CD8-positive, alpha-beta T cell (primary cell): ENCODE measurements at regions of chr14 and their contacts with region 1.

Region 1: DNA sequence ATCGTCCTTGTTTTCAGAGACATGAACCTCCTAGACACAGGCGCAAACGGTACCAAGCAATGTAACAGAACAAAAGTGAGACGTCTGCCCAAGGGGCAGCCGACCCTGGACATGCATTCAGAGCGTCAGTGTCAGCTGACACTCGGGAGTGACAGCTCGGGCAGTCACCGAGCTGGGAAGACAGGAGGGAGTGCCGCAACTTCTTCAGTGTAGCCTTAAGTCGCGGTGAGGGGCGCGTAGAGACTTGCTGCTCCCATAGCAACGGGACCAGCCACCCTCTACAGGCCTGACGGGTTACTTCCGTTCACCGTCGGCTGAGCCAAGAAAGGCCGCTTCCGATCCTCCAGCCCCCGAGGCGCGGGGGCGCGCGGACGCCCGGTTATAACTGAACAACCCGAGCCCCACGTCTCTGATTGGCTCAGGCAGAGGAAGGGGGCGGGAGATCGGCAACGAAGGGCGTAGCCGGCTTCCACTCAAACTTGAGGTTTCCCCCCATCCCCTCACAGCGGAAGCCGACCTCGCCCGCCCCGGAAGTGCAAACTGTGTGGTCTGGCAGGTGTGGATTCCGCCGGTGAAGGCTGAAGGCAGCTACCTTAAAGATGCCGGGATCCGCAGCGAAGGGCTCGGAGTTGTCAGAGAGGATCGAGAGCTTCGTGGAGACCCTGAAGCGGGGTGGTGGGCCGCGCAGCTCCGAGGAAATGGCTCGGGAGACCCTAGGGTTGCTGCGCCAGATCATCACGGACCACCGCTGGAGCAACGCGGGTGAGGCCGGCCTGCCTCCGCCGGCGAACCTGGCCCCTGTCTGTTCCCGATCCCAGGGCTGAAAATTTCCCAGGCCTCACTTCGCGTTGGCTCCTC is at the start of gene EIF2B2:
- DNase-seq: peak; percentile 98 to 99 (median 99)
- ATAC-seq: peak; percentile 96
- H3K4me3 ChIP-seq: peak within 1 kb of the TSS; percentile 81 to 94
- H3K4me3 Mint-ChIP-seq: peak within 1 kb of the TSS; percentile 97
- H3K27ac ChIP-seq: peak within 1 kb of the TSS; percentile 91 to 93
- H3K27ac Mint-ChIP-seq: peak within 1 kb of the TSS; percentile 97
- H3K4me1 ChIP-seq: peaks cover 19% of the 10 kb centered on the region
- H3K4me1 Mint-ChIP-seq: peaks cover 43% of the 10 kb centered on the region
- H3K27me3 ChIP-seq: no peaks in the 10 kb centered on the region
- H3K27me3 Mint-ChIP-seq: no peaks in the 10 kb centered on the region
- CTCF ChIP-seq: no peak
- total RNA-seq, gene EIF2B2: 19.8 to 20.6 TPM

Region 2: DNA sequence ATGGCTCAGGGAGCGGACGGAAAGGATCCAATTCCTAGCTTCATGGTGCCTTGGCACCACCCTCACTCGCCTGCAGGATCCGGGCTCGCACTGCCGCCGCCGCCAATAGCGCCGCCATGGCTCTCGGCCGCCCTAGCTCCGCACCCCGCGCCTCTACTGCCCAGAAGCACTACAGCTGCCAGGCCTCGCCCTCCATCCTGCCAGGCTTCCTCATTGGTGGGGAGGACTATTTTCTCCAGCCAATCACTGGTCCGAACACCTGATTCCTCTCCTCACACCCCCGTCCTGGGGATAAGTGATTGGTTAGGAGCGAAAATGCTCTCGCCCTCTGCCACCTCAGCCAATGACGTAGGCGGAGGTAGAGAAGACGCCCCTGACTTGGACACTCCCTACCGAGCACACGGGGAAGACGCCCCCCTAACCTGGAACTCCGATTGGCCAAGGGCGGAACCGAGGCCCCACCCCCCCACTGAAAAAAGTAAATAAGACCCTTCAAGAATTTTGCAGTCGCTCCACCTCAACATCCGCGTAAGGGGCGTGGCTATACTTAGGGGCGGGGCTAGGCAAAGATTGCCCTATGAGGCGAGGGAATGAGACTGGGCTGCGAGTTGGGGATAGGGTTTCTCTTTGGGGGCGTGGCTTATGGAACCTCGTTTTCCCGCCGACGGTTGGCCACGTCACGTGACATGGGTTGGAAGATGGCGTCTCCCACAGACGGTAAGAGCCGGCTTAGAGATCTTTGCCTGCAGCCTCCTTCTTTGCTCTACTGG is 918.2 kb before region 1 on chr14 and contains the starts of genes ALDH6A1 and LIN52:
- CTCF ChIA-PET with region 1: no interaction called
- POLR2A ChIA-PET with region 1: no interaction called
- intact Hi-C with region 1: loop called in 1 of 2 experiments (anchors 10 kb)
- DNase-seq: peak; percentile 100
- ATAC-seq: peak; percentile 85
- H3K4me3 ChIP-seq: peak within 1 kb of the TSS; percentile 80 to 90
- H3K4me3 Mint-ChIP-seq: peak within 1 kb of the TSS; percentile 98
- H3K27ac ChIP-seq: peak within 1 kb of the TSS; percentile 70 to 73
- H3K27ac Mint-ChIP-seq: peak within 1 kb of the TSS; percentile 96
- H3K4me1 ChIP-seq: peaks cover 19% of the 10 kb centered on the region
- H3K4me1 Mint-ChIP-seq: peaks cover 33% of the 10 kb centered on the region
- H3K27me3 ChIP-seq: no peaks in the 10 kb centered on the region
- H3K27me3 Mint-ChIP-seq: no peaks in the 10 kb centered on the region
- CTCF ChIP-seq: no peak
- total RNA-seq, gene ALDH6A1: 3.8 to 4.0 TPM
- total RNA-seq, gene LIN52: 6.1 to 6.8 TPM

Region 3: DNA sequence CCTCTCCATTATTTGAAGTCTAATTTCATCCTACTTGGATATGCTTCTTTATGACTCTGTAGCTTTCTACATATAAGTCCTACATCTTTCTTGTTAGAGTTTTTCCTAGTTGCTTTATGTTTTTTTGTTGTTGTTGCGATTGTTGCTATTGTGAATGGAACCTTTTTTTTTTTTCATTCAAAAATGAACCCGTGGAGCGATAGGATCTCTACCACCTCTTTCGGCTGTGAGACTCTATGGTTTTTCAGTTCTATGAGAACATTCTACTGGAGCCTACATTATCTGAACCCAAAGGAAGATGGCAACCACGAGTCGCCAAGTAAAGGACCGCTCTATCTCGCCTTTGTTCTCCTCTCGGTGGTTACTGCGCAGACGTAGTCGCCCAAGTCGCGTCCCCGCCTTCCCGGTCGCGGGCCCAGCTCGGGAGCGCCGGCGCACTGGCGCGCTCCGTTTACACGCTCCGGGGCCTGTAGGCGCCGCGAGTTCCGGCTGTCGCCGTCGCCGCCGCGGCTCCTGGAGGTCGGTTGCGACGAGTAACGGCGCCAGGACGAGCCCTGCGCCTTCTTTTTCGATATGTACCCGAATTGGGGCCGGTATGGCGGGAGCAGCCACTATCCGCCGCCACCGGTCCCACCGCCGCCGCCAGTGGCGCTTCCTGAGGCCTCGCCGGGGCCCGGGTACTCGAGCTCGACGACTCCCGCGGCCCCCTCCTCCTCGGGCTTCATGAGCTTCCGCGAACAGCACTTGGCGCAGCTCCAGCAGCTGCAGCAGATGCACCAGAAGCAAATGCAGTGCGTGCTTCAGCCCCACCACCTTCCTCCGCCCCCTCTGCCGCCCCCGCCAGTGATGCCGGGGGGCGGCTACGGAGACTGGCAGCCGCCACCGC is 239.5 kb before region 1 on chr14 and contains the start of gene YLPM1:
- CTCF ChIA-PET with region 1: no interaction called
- POLR2A ChIA-PET with region 1: no interaction called
- intact Hi-C with region 1: loop called in 1 of 2 experiments (anchors 2 kb)
- DNase-seq: peak; percentile 88 to 98 (median 91)
- ATAC-seq: peak; percentile 93
- H3K4me3 ChIP-seq: peak within 1 kb of the TSS; percentile 90 to 95
- H3K4me3 Mint-ChIP-seq: peak within 1 kb of the TSS; percentile 86
- H3K27ac ChIP-seq: peak within 1 kb of the TSS; percentile 68 to 98
- H3K27ac Mint-ChIP-seq: peak within 1 kb of the TSS; percentile 93
- H3K4me1 ChIP-seq: peaks cover 43% of the 10 kb centered on the region
- H3K4me1 Mint-ChIP-seq: peaks cover 51% of the 10 kb centered on the region
- H3K27me3 ChIP-seq: no peaks in the 10 kb centered on the region
- H3K27me3 Mint-ChIP-seq: no peaks in the 10 kb centered on the region
- CTCF ChIP-seq: peak; percentile 41
- total RNA-seq, gene YLPM1: 77.3 to 78.8 TPM

Region 4: GRCh38 chr14:74955229-74956026 is 47.2 kb before region 1 on chr14 and contains the start of gene PGF:
- CTCF ChIA-PET with region 1: no interaction called
- POLR2A ChIA-PET with region 1: no interaction called
- intact Hi-C with region 1: loop called in 1 of 2 experiments (anchors 2 kb)
- DNase-seq: peak in 5 of 9 experiments; percentile 20 to 54 (median 35)
- ATAC-seq: peak; percentile 67
- H3K4me3 ChIP-seq: peak within 1 kb of the TSS; percentile 39 to 50
- H3K4me3 Mint-ChIP-seq: peak within 1 kb of the TSS; percentile 47
- H3K27ac ChIP-seq: no peak within 1 kb of the TSS
- H3K27ac Mint-ChIP-seq: no peak within 1 kb of the TSS
- H3K4me1 ChIP-seq: peaks cover 9% of the 10 kb centered on the region
- H3K4me1 Mint-ChIP-seq: no peaks in the 10 kb centered on the region
- H3K27me3 ChIP-seq: peaks cover 5% of the 10 kb centered on the region in 2 experiments
- H3K27me3 Mint-ChIP-seq: peaks cover 11% of the 10 kb centered on the region
- CTCF ChIP-seq: no peak
- total RNA-seq, gene PGF: 0.44 TPM in 1 of 2 experiments, not detected in the other

Region 5: DNA sequence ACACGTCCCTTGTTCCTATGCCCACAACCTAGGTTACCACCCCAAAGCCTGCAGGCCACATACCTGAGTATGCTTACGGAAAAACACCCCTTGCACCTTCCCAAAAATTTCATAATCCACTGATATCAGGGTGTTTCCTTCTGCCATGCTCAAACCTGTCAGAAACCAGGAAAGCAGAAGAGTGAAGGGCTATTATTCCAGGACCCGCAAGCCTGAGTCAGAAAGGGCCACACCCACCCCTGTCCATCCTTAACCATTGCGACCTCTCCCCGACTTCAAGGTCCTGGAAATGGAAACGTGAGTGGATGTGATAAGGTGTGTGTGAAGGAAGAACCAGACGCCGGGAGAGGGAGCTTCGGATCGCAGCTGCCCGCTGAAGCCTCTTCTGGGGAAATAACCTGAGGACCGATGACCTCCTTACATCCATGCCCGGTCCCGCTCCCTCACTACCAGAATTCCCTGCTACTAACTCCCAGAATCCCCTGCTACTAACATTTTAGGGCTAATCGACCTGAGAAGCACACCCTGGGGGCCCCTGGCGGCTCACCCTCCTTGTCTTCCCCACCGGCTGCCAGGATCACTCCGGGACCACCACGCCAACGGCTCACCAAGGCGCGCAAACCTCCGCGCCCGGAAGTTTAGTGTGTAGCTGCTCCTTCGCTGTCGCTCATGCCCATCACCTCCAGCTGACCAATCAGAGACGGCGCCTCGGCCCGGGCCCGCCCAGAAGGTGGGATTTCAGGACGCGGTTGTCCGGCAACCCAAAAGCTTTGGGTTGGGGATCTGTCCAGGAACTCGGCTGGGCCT is 61.0 kb after region 1 on chr14 and contains the start of gene ACYP1:
- CTCF ChIA-PET with region 1: no interaction called
- POLR2A ChIA-PET with region 1: interaction called, 7 read pairs
- intact Hi-C with region 1: loop called in 1 of 2 experiments (anchors 1 kb)
- DNase-seq: peak; percentile 78 to 93 (median 89)
- ATAC-seq: peak; percentile 99
- H3K4me3 ChIP-seq: peak within 1 kb of the TSS; percentile 80 to 84
- H3K4me3 Mint-ChIP-seq: peak within 1 kb of the TSS; percentile 99
- H3K27ac ChIP-seq: peak within 1 kb of the TSS; percentile 60 to 68
- H3K27ac Mint-ChIP-seq: peak within 1 kb of the TSS; percentile 95
- H3K4me1 ChIP-seq: peaks cover 9% of the 10 kb centered on the region
- H3K4me1 Mint-ChIP-seq: peaks cover 27% of the 10 kb centered on the region
- H3K27me3 ChIP-seq: no peaks in the 10 kb centered on the region
- H3K27me3 Mint-ChIP-seq: no peaks in the 10 kb centered on the region
- CTCF ChIP-seq: no peak
- total RNA-seq, gene ACYP1: 4.3 to 5.3 TPM

Region 6: DNA sequence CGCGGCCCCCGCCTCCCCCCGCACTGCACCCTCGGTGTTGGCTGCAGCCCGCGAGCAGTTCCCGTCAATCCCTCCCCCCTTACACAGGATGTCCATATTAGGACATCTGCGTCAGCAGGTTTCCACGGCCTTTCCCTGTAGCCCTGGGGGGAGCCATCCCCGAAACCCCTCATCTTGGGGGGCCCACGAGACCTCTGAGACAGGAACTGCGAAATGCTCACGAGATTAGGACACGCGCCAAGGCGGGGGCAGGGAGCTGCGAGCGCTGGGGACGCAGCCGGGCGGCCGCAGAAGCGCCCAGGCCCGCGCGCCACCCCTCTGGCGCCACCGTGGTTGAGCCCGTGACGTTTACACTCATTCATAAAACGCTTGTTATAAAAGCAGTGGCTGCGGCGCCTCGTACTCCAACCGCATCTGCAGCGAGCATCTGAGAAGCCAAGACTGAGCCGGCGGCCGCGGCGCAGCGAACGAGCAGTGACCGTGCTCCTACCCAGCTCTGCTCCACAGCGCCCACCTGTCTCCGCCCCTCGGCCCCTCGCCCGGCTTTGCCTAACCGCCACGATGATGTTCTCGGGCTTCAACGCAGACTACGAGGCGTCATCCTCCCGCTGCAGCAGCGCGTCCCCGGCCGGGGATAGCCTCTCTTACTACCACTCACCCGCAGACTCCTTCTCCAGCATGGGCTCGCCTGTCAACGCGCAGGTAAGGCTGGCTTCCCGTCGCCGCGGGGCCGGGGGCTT is 276.0 kb after region 1 on chr14 and contains the start of gene FOS:
- CTCF ChIA-PET with region 1: no interaction called
- POLR2A ChIA-PET with region 1: no interaction called
- intact Hi-C with region 1: loop called in 1 of 2 experiments (anchors 5 kb)
- DNase-seq: peak; percentile 81 to 98 (median 91)
- ATAC-seq: peak; percentile 67
- H3K4me3 ChIP-seq: peak within 1 kb of the TSS; percentile 77 to 89
- H3K4me3 Mint-ChIP-seq: peak within 1 kb of the TSS; percentile 97
- H3K27ac ChIP-seq: peak within 1 kb of the TSS; percentile 81 to 90
- H3K27ac Mint-ChIP-seq: peak within 1 kb of the TSS; percentile 98
- H3K4me1 ChIP-seq: peaks cover 55% of the 10 kb centered on the region
- H3K4me1 Mint-ChIP-seq: peaks cover 47% of the 10 kb centered on the region
- H3K27me3 ChIP-seq: peaks cover 10 to 38% of the 10 kb centered on the region in 2 experiments
- H3K27me3 Mint-ChIP-seq: peaks cover 17% of the 10 kb centered on the region
- CTCF ChIP-seq: no peak
- total RNA-seq, gene FOS: 1,826 to 1,941 TPM